WTC11 (cell line): ENCODE measurements at regions of chr1 and their contacts with region 1.

Region 1: GRCh38 chr1:210373885-210374599 is 45.3 kb downstream of the HHAT start:
- DNase-seq: peak; percentile 93
- ATAC-seq: peak; percentile 84
- H3K4me3 Mint-ChIP-seq: peak overlapping the region; percentile 52; the same call in 1 of the 2 replicates
- H3K27ac Mint-ChIP-seq: peak overlapping the region; percentile 98
- H3K4me1 Mint-ChIP-seq: peaks cover 55% of the 10 kb centered on the region
- H3K27me3 Mint-ChIP-seq: peaks cover 46% of the 10 kb centered on the region
- CTCF ChIP-seq: peak; percentile 91

Region 2: DNA sequence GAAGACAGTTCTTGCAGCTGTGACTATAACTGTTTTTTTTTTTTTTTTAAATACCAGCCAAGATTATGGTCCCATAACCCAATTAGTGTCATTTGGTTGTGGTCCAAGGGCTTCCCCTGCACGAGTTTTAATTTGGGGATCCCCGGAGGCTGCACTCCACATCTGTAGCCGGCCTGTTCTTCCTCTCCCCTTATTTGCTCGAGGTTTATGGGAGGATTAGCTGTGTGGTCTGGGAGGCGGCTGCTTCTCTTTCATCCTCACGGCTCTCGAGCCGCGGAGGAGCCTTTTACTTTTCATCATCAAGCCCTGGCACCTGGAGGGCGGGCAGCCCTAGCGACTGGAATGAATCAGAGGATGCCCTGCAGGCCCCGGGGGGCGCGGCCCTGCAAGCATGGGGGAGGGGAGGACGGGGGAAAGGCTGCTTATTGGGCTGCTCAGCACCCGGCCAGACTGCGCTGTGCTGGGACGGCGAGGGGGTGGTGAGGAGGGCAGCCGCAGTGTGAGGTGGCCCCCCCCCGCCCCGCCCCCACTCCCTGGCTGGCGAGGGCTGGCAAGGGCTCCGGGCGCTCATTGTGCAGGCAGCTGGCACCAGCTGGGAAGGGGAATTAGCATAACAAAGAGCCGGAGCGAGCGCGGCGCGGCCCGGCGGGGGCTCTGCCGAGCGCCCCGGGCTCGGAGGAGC is 122.9 kb before region 1 on chr1:
- CTCF ChIA-PET with region 1: interaction called, 12 read pairs
- POLR2A ChIA-PET with region 1: no interaction called
- DNase-seq: peak; percentile 79
- ATAC-seq: peak; percentile 52
- H3K4me3 Mint-ChIP-seq: peak overlapping the region; percentile 72
- H3K27ac Mint-ChIP-seq: peak overlapping the region; percentile 53
- H3K4me1 Mint-ChIP-seq: peaks cover 39% of the 10 kb centered on the region
- H3K27me3 Mint-ChIP-seq: peaks cover 17% of the 10 kb centered on the region
- CTCF ChIP-seq: no peak

Region 3: GRCh38 chr1:210280221-210280620 is 93.8 kb before region 1 on chr1:
- CTCF ChIA-PET with region 1: no interaction called
- POLR2A ChIA-PET with region 1: no interaction called
- DNase-seq: no peak
- ATAC-seq: no peak
- H3K4me3 Mint-ChIP-seq: no peak overlapping the region
- H3K27ac Mint-ChIP-seq: no peak overlapping the region
- H3K4me1 Mint-ChIP-seq: peaks cover 4% of the 10 kb centered on the region; the same call in 1 of the 2 replicates
- H3K27me3 Mint-ChIP-seq: peaks cover 20% of the 10 kb centered on the region
- CTCF ChIP-seq: no peak

Region 4: GRCh38 chr1:210360852-210361477 is 13.1 kb before region 1 on chr1:
- CTCF ChIA-PET with region 1: interaction called, 31 read pairs
- POLR2A ChIA-PET with region 1: interaction called, 8 read pairs
- DNase-seq: no peak
- ATAC-seq: peak; percentile 56
- H3K4me3 Mint-ChIP-seq: no peak overlapping the region
- H3K27ac Mint-ChIP-seq: no peak overlapping the region
- H3K4me1 Mint-ChIP-seq: peaks cover 40% of the 10 kb centered on the region
- H3K27me3 Mint-ChIP-seq: peaks cover 12% of the 10 kb centered on the region
- CTCF ChIP-seq: no peak

Region 5: GRCh38 chr1:210384630-210385029 is 10.6 kb after region 1 on chr1:
- CTCF ChIA-PET with region 1: interaction called, 10 read pairs
- POLR2A ChIA-PET with region 1: interaction called, 3 read pairs
- DNase-seq: no peak
- ATAC-seq: no peak
- H3K4me3 Mint-ChIP-seq: no peak overlapping the region
- H3K27ac Mint-ChIP-seq: no peak overlapping the region
- H3K4me1 Mint-ChIP-seq: peaks cover 19% of the 10 kb centered on the region
- H3K27me3 Mint-ChIP-seq: no peaks in the 10 kb centered on the region
- CTCF ChIP-seq: no peak

Region 6: DNA sequence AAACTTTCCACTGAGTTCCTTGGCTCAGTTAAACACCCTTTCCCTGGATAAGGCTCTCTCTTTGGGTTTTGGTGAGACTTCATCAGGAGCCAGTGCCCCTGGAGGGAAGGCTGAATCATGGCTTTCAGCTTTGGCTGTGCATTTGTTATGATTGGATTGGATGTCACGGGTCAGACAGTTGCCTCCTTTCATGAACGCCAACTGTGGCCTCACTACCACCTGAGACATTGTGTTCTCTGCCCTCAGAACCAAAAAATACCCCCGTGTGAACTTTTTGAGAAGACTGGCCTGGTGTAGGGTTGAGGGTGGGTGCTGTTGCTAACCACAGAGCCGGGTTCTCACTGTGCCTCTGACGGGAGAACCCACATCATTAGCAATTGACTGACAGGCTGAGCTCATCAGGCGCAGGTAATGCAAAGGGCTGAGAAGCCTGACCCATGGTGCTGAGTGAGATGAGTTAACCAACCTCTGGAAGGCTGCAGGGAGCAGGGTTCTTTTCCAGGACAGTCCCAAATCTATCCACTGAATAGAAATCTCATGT is 20.3 kb after region 1 on chr1:
- CTCF ChIA-PET with region 1: interaction called, 10 read pairs
- POLR2A ChIA-PET with region 1: no interaction called
- DNase-seq: no peak
- ATAC-seq: no peak
- H3K4me3 Mint-ChIP-seq: no peak overlapping the region
- H3K27ac Mint-ChIP-seq: no peak overlapping the region
- H3K4me1 Mint-ChIP-seq: no peaks in the 10 kb centered on the region
- H3K27me3 Mint-ChIP-seq: no peaks in the 10 kb centered on the region
- CTCF ChIP-seq: no peak

Region 7: GRCh38 chr1:210407207-210407886 is 33.3 kb after region 1 on chr1:
- CTCF ChIA-PET with region 1: interaction called, 32 read pairs
- POLR2A ChIA-PET with region 1: no interaction called
- DNase-seq: peak; percentile 81
- ATAC-seq: peak; percentile 70
- H3K4me3 Mint-ChIP-seq: 0 out of 2 replicates have a peak overlapping the region, but pooled peaks have one; percentile 16
- H3K27ac Mint-ChIP-seq: peak overlapping the region; percentile 92
- H3K4me1 Mint-ChIP-seq: peaks cover 26% of the 10 kb centered on the region
- H3K27me3 Mint-ChIP-seq: no peaks in the 10 kb centered on the region; the same call in 1 of the 2 replicates
- CTCF ChIP-seq: peak; percentile 92